GM12878 (cell line): ENCODE measurements at regions of chr2 and their contacts with region 1.

Region 1: DNA sequence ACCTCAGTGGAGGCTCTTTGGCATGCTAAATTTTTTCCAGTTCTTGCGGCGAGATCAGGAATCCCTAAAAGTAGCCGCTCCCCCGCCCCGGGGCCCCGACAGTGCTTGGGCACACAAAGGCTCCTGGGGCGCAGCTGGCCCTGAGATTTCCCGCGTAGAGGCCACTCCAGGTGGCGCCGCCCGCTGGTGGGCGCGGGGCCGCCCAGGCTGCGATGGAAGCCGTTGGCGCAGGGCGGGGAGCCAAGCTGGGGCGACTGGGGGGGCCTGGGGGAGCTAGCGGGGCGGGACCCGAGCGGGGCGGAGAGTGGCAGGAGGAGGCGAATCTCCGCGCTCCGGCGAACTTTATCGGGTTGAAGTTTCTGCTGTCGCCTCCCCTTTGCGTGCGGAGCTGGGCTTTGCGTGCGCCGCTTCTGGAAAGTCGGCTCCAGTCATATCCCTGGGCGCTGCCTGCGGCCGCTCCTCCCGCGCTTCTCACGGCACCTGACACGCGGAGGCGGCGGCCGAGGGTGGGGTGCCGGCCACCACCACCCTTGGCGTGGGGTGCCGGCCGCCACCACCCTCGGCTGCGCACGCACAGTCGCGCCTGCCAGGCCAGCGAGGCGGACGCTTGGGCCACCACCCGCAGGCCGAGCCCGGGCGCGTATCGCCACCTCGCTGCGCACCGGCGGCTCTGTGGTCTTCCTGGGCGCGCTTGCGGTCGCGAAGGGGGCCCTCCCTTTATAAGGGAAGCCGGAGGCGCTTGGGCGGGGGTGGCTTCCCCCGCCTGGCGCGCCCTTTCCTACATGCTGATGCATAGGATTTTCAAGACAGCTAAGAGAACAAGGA is 867 bp upstream of the CYP1B1 start:
- DNase-seq: no peak
- ATAC-seq: peak; percentile 79
- H3K4me3 ChIP-seq: peak overlapping the region; percentile 71
- H3K27ac ChIP-seq: peak overlapping the region; percentile 77
- H3K4me1 ChIP-seq: peaks cover 11% of the 10 kb centered on the region
- H3K27me3 ChIP-seq: no peaks in the 10 kb centered on the region; a peak in 2 of 4 replicates
- CTCF ChIP-seq: peak; percentile 12 to 37 (median 34); a peak in 4 of 6 replicates
- EP300 ChIP-seq: peak; percentile 94 to 97
- POLR2A ChIP-seq: peak; percentile 63
- RAD21 ChIP-seq: peak; percentile 46; the same call in 1 of the 2 replicates

Region 2: DNA sequence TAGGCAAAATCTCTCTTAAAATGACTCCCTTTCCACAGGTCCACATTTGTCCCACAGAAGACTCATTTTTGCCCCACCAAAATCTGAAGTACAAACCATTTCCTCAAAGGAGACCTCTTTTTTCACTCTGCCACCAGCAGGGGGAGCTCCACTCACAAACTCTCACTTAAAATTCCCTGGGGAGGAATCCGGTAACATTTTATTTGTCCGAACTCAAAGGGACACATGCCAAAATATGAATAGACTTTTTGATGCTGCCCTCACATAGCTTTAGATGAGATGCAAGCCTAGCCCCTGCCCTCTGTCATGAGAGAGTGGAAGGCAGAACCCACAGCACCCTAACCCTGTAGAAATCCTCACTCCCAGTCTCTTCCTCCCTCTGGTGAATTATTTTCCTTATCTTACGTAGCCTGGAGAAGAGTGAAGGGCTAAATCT is 94.7 kb before region 1 on chr2:
- CTCF ChIA-PET with region 1: interaction called, 3 read pairs
- POLR2A ChIA-PET with region 1: no interaction called
- RAD21 ChIA-PET with region 1: no interaction called
- SMC1A ChIA-PET with region 1: no interaction called
- in situ Hi-C with region 1: no loop called
- intact Hi-C with region 1: loop called (anchors 1 kb)
- DNase-seq: peak; percentile 30
- ATAC-seq: peak; percentile 61
- H3K4me3 ChIP-seq: no peak overlapping the region
- H3K27ac ChIP-seq: no peak overlapping the region
- H3K4me1 ChIP-seq: no peaks in the 10 kb centered on the region
- H3K27me3 ChIP-seq: no peaks in the 10 kb centered on the region
- CTCF ChIP-seq: peak; percentile 61 to 76 (median 70)
- EP300 ChIP-seq: no peak
- POLR2A ChIP-seq: no peak
- RAD21 ChIP-seq: peak; percentile 64

Region 3: DNA sequence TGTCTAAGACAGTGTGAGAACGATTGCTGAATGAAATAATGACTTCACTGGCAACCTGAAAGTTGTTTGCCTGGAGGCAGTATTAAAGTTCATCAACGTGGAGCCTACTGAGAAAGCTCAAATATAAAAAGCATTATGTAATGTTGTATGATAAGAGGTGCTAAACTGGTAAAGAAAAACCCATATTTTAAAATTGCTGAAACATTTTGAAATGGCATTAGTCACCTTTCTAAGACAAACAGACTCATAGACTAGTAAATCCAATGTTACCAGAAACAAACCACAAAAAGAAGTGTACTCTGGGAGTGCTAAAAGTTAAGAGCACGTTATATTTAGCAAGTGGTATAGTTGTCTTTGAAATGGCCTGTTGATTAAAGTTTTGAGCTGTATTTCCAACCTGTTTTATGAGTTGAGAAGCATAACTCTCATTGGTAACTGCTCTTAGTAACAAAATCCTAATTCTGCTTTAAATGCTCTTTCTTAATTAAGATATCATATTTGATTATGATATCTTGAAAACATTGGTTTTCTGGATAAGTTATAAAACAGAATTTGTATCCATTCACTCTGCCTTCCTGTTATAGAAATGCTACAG is 63.6 kb before region 1 on chr2:
- CTCF ChIA-PET with region 1: no interaction called
- POLR2A ChIA-PET with region 1: no interaction called
- RAD21 ChIA-PET with region 1: no interaction called
- SMC1A ChIA-PET with region 1: no interaction called
- in situ Hi-C with region 1: no loop called
- intact Hi-C with region 1: no loop called
- DNase-seq: no peak
- ATAC-seq: no peak
- H3K4me3 ChIP-seq: no peak overlapping the region
- H3K27ac ChIP-seq: no peak overlapping the region
- H3K4me1 ChIP-seq: no peaks in the 10 kb centered on the region
- H3K27me3 ChIP-seq: no peaks in the 10 kb centered on the region
- CTCF ChIP-seq: no peak
- EP300 ChIP-seq: no peak
- POLR2A ChIP-seq: no peak
- RAD21 ChIP-seq: no peak

Region 4: DNA sequence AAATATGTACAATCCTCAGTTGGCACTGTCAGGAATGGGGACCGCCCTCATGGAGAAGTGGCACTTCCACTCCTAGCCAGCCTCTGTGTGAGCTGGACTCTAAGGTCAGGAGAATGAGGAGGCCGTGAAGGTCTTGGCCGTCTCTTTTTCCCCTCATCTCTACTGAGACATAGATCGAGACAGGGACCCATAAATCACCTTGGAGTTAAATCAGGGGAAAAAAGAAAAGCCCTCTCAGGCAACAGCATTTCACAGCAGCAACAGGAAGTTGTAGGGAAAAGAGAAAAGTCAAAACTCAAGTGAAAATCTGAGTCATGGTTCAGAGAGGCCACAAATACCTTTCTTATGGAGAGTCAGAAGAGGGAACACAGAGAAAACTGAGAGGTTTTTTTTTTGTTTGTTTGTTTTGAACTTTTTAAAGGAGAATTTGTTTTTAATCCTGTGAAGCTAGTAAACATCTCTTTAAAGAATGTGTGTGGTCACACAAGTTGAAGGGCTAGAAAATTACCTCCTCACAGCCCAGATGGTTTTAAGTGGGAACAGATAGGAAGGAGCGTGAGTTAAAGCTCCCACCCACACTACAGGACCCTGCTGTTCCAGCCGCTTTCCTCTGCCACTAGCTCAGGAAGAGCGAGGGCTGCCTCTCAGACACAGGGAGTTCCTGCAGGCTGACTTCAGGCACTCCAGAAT is 29.7 kb after region 1 on chr2:
- CTCF ChIA-PET with region 1: no interaction called
- POLR2A ChIA-PET with region 1: no interaction called
- RAD21 ChIA-PET with region 1: interaction called, 4 read pairs
- SMC1A ChIA-PET with region 1: no interaction called
- in situ Hi-C with region 1: no loop called
- intact Hi-C with region 1: loop called (anchors 2 kb)
- DNase-seq: no peak
- ATAC-seq: peak; percentile 64
- H3K4me3 ChIP-seq: no peak overlapping the region
- H3K27ac ChIP-seq: peak overlapping the region; percentile 63
- H3K4me1 ChIP-seq: peaks cover 8% of the 10 kb centered on the region
- H3K27me3 ChIP-seq: no peaks in the 10 kb centered on the region
- CTCF ChIP-seq: no peak
- EP300 ChIP-seq: no peak
- POLR2A ChIP-seq: no peak
- RAD21 ChIP-seq: 0 out of 2 replicates have a peak, but pooled peaks have one; percentile 6

Region 5: DNA sequence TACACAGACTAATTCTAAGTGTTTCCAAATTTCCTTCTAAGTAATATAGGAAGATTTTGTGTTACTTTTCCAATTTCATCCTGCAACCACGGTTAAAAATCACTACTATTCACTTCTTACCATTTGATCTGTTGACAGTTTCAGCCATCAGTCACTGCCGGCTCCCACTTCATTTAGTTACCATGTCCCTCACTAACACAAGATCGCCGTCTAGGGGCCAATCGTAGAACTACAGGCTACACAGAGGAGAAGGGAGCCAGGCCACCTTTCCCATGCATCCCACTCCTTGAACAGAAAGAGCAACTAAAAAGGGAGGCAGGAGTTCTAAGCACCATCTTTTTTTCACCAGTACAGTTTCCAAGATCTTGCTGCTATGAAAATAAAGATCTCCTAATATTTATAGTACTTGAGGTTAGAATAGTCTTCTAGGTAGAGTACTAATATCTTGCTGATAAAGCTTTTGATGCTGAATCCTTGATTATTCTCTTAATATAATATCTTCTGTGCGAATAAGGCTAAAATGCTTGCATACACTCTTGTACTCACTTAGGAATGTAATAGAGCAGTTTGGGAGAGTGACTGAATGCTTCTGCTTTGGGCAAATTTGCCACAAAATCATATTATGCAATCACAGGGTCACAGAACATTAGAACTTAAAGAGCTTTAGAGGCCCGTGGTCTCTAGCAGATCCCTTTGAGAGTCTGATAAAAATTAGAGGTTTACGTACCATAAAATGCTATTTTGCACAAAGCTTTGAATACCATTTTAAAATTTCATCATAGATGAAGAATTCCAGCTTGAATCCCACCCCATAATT is 38.6 kb after region 1 on chr2:
- CTCF ChIA-PET with region 1: interaction called, 5 read pairs
- POLR2A ChIA-PET with region 1: no interaction called
- RAD21 ChIA-PET with region 1: interaction called, 4 read pairs
- SMC1A ChIA-PET with region 1: no interaction called
- in situ Hi-C with region 1: no loop called
- intact Hi-C with region 1: loop called (anchors 1 kb)
- DNase-seq: peak; percentile 55
- ATAC-seq: peak; percentile 96
- H3K4me3 ChIP-seq: no peak overlapping the region
- H3K27ac ChIP-seq: no peak overlapping the region; the same call in 1 of the 2 replicates
- H3K4me1 ChIP-seq: peaks cover 9% of the 10 kb centered on the region
- H3K27me3 ChIP-seq: no peaks in the 10 kb centered on the region
- CTCF ChIP-seq: peak; percentile 91 to 97 (median 96)
- EP300 ChIP-seq: no peak
- POLR2A ChIP-seq: no peak
- RAD21 ChIP-seq: peak; percentile 98

Region 6: GRCh38 chr2:38146275-38146906 is 69.6 kb after region 1 on chr2:
- CTCF ChIA-PET with region 1: no interaction called
- POLR2A ChIA-PET with region 1: no interaction called
- RAD21 ChIA-PET with region 1: no interaction called
- SMC1A ChIA-PET with region 1: no interaction called
- in situ Hi-C with region 1: no loop called
- intact Hi-C with region 1: loop called (anchors 2 kb)
- DNase-seq: peak; percentile 71
- ATAC-seq: peak; percentile 91
- H3K4me3 ChIP-seq: no peak overlapping the region; the same call in 1 of the 2 replicates
- H3K27ac ChIP-seq: peak overlapping the region; percentile 89
- H3K4me1 ChIP-seq: peaks cover 31% of the 10 kb centered on the region
- H3K27me3 ChIP-seq: no peaks in the 10 kb centered on the region
- CTCF ChIP-seq: no peak
- EP300 ChIP-seq: no peak
- POLR2A ChIP-seq: no peak; the same call in 1 of the 2 replicates
- RAD21 ChIP-seq: no peak

Region 7: DNA sequence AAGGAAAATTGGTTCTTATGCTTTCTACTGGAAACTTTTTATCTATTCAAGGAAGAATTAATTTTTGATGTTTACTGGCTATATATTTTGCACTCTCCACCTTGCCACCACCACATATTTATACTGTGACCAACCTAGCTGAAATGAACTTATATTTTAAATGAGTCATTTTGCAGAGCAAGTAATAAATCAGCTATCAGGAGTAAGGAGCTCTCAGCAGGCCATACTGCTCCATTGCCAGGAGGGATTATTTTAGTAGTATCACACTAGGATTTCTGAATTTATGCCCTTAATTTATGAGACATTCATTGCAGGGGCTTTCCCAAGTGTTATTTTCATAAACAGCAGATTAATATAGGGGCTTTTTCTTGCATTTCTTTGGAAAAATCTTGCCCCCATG is 125.0 kb after region 1 on chr2:
- CTCF ChIA-PET with region 1: no interaction called
- POLR2A ChIA-PET with region 1: no interaction called
- RAD21 ChIA-PET with region 1: no interaction called
- SMC1A ChIA-PET with region 1: no interaction called
- in situ Hi-C with region 1: no loop called
- intact Hi-C with region 1: no loop called
- DNase-seq: no peak
- ATAC-seq: no peak
- H3K4me3 ChIP-seq: no peak overlapping the region
- H3K27ac ChIP-seq: no peak overlapping the region
- H3K4me1 ChIP-seq: no peaks in the 10 kb centered on the region
- H3K27me3 ChIP-seq: no peaks in the 10 kb centered on the region
- CTCF ChIP-seq: no peak
- EP300 ChIP-seq: no peak
- POLR2A ChIP-seq: no peak
- RAD21 ChIP-seq: no peak

Region 8: GRCh38 chr2:38264396-38265281 is 187.8 kb after region 1 on chr2:
- CTCF ChIA-PET with region 1: interaction called, 3 read pairs
- POLR2A ChIA-PET with region 1: no interaction called
- RAD21 ChIA-PET with region 1: no interaction called
- SMC1A ChIA-PET with region 1: interaction called, 3 read pairs
- in situ Hi-C with region 1: no loop called
- intact Hi-C with region 1: loop called (anchors 2 kb)
- DNase-seq: no peak
- ATAC-seq: no peak
- H3K4me3 ChIP-seq: no peak overlapping the region
- H3K27ac ChIP-seq: peak overlapping the region; percentile 78
- H3K4me1 ChIP-seq: peaks cover 32% of the 10 kb centered on the region
- H3K27me3 ChIP-seq: no peaks in the 10 kb centered on the region
- CTCF ChIP-seq: no peak
- EP300 ChIP-seq: no peak
- POLR2A ChIP-seq: no peak
- RAD21 ChIP-seq: no peak

Region 9: GRCh38 chr2:38274286-38275276 is 197.8 kb after region 1 on chr2:
- CTCF ChIA-PET with region 1: interaction called, 5 read pairs
- POLR2A ChIA-PET with region 1: no interaction called
- RAD21 ChIA-PET with region 1: interaction called, 9 read pairs
- SMC1A ChIA-PET with region 1: interaction called, 8 read pairs
- in situ Hi-C with region 1: no loop called
- intact Hi-C with region 1: loop called (anchors 1 kb)
- DNase-seq: peak; percentile 65
- ATAC-seq: peak; percentile 89
- H3K4me3 ChIP-seq: no peak overlapping the region
- H3K27ac ChIP-seq: no peak overlapping the region
- H3K4me1 ChIP-seq: no peaks in the 10 kb centered on the region
- H3K27me3 ChIP-seq: no peaks in the 10 kb centered on the region
- CTCF ChIP-seq: peak; percentile 53 to 79 (median 63); a peak in 5 of 6 replicates
- EP300 ChIP-seq: no peak
- POLR2A ChIP-seq: no peak
- RAD21 ChIP-seq: peak; percentile 93